ENCODE measurements at regions of chr1 and their contacts with region 1.

Region 1: GRCh38 chr1:241611063-241611462 is 29.1 kb downstream of the CHML start:
- DNase-seq: peak; percentile 75
- ATAC-seq: peak; percentile 95
- H3K4me3 ChIP-seq: no peak overlapping the region
- H3K4me3 Mint-ChIP-seq: no peak overlapping the region
- H3K27ac ChIP-seq: peak overlapping the region in 1 of 2 donors; percentile 39
- H3K27ac Mint-ChIP-seq: no peak overlapping the region
- H3K4me1 ChIP-seq: peaks cover 6 to 7% of the 10 kb centered on the region in 2 donors
- H3K4me1 Mint-ChIP-seq: peaks cover 8% of the 10 kb centered on the region
- H3K27me3 ChIP-seq: no peaks in the 10 kb centered on the region
- H3K27me3 Mint-ChIP-seq: no peaks in the 10 kb centered on the region
- CTCF ChIP-seq: peak; percentile 82

Region 2: DNA sequence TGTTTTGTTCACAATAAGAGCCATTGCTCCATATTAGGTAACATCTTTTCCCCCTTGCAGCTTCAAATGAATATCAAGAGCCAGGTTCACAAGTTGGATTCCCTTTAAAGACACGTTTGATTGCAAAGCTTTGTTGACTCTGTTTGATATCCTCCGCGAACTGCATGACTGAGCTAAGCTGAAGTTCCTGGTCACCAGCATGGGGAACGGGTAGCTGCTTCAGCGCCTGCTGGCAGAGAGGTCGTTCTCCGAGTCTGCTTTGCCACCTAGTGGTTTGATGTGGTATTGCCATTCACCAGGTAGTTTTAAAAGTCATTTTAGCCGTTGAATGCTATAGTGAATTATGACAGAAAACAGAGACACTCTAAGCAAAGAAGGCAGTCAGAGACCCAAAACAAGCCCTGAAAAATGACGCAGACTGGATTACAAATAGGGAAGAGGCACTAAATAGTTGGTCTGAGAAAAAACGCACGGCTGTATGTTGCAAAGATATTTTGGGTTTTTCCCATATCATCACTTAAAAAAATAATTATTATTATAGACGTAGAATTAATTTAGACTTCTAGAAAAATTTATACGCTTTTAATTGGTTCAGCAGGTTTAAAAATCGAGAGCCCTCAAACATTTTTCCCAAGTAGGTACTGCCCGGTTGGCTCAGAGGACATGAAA is 1712.9 kb before region 1 on chr1:
- CTCF ChIA-PET with region 1: no interaction called
- POLR2A ChIA-PET with region 1: no interaction called
- intact Hi-C with region 1: no loop called
- DNase-seq: peak; percentile 62
- ATAC-seq: peak; percentile 47
- H3K4me3 ChIP-seq: no peak overlapping the region
- H3K4me3 Mint-ChIP-seq: no peak overlapping the region
- H3K27ac ChIP-seq: no peak overlapping the region
- H3K27ac Mint-ChIP-seq: no peak overlapping the region
- H3K4me1 ChIP-seq: peaks cover 3% of the 10 kb centered on the region in 2 donors
- H3K4me1 Mint-ChIP-seq: peaks cover 2% of the 10 kb centered on the region
- H3K27me3 ChIP-seq: no peaks in the 10 kb centered on the region
- H3K27me3 Mint-ChIP-seq: no peaks in the 10 kb centered on the region
- CTCF ChIP-seq: peak; percentile 90

Region 3: GRCh38 chr1:241086686-241087085 is 524.4 kb before region 1 on chr1:
- CTCF ChIA-PET with region 1: no interaction called
- POLR2A ChIA-PET with region 1: no interaction called
- intact Hi-C with region 1: no loop called
- DNase-seq: no peak
- ATAC-seq: no peak
- H3K4me3 ChIP-seq: no peak overlapping the region
- H3K4me3 Mint-ChIP-seq: no peak overlapping the region
- H3K27ac ChIP-seq: no peak overlapping the region
- H3K27ac Mint-ChIP-seq: no peak overlapping the region
- H3K4me1 ChIP-seq: no peaks in the 10 kb centered on the region
- H3K4me1 Mint-ChIP-seq: peaks cover 3% of the 10 kb centered on the region
- H3K27me3 ChIP-seq: no peaks in the 10 kb centered on the region
- H3K27me3 Mint-ChIP-seq: no peaks in the 10 kb centered on the region
- CTCF ChIP-seq: no peak

Region 4: GRCh38 chr1:241356519-241357365 is 254.3 kb before region 1 on chr1 and contains the start of gene RGS7:
- CTCF ChIA-PET with region 1: no interaction called
- POLR2A ChIA-PET with region 1: no interaction called
- intact Hi-C with region 1: no loop called
- DNase-seq: peak; percentile 54
- ATAC-seq: peak; percentile 64
- H3K4me3 ChIP-seq: peak within 1 kb of the TSS in 4 of 5 experiments; percentile 32 to 75 (median 57)
- H3K4me3 Mint-ChIP-seq: peak within 1 kb of the TSS; percentile 87
- H3K27ac ChIP-seq: no peak within 1 kb of the TSS
- H3K27ac Mint-ChIP-seq: no peak within 1 kb of the TSS
- H3K4me1 ChIP-seq: peaks cover 8 to 12% of the 10 kb centered on the region in 2 donors
- H3K4me1 Mint-ChIP-seq: peaks cover 14% of the 10 kb centered on the region
- H3K27me3 ChIP-seq: peaks cover 0 to 17% (median 10%) of the 10 kb centered on the region in 4 experiments
- H3K27me3 Mint-ChIP-seq: peaks cover 54% of the 10 kb centered on the region
- CTCF ChIP-seq: no peak
- total RNA-seq, gene RGS7: 0.15 TPM in 1 of 2 replicates, not detected in the other

Region 5: DNA sequence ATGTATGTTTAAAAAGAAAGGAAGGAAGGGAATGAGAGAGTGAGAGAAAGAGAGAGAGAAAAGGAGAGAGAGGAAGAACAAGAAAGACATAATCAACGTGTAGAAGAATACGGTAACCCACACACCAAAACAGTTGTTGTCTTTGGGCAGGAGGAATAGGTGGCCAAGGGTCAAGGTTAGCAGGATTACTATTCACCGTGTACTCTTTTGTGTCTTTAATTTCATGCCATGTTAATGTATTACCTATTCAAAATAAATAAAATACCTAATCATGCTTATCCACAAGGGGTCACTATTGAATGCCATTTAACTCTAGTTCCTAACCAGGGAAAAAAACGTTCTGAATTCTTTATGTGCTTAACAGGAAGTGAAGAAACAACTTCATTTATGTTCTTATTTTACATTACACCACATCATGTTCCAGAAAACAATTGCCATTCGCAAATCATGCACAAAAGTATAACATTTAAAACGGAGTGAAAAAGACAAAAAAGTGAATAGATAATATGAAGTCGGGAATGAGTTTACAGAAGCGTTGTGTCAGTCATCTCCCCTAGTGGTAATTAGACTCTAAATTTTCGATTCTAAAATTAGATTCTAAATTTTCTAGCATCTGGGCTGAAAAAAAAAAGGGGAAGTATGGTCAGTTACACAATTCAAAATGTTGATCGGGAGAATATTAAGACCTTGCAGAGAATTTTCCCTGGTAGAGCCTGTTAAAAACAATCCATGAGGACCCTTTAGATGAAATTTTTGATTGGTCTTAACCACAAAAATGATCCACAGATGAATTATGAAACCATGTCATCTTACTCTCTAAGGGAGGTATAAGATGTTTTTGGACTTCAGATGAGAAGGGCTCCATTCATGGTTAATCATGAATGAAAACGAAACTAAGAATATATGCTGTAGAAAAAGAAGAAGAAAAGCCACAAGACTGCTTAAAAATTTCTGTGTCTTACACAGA is 79.6 kb before region 1 on chr1:
- CTCF ChIA-PET with region 1: interaction called, 10 read pairs
- POLR2A ChIA-PET with region 1: no interaction called
- intact Hi-C with region 1: loop called (anchors 1 kb)
- DNase-seq: peak; percentile 91
- ATAC-seq: peak; percentile 68
- H3K4me3 ChIP-seq: peak overlapping the region; percentile 58 to 98 (median 78)
- H3K4me3 Mint-ChIP-seq: peak overlapping the region; percentile 92
- H3K27ac ChIP-seq: peak overlapping the region; percentile 87 to 96
- H3K27ac Mint-ChIP-seq: peak overlapping the region; percentile 96
- H3K4me1 ChIP-seq: peaks cover 29 to 41% of the 10 kb centered on the region in 2 donors
- H3K4me1 Mint-ChIP-seq: peaks cover 42% of the 10 kb centered on the region
- H3K27me3 ChIP-seq: no peaks in the 10 kb centered on the region
- H3K27me3 Mint-ChIP-seq: no peaks in the 10 kb centered on the region
- CTCF ChIP-seq: peak; percentile 93

Region 6: DNA sequence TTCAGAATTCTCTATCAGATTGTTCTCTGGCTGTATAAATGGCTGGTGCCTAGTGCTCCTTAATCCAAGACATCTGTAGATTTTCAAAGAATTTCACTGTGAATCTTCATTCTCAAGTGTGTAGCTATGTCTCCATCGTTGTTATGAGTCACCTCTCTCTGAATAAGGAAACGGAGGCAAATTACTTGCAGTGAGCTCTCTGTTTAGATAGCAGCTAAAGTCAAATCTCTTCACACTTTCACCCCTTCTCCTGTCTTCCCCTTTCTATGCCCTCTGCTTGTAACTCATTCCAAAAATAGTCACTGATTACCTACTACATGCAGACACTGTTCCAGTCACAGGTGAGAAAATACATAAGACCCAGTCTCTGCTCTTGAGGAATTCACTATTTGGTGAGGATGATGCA is 10.6 kb before region 1 on chr1:
- CTCF ChIA-PET with region 1: interaction called, 10 read pairs
- POLR2A ChIA-PET with region 1: interaction called, 4 read pairs
- intact Hi-C with region 1: loop called (anchors 2 kb)
- DNase-seq: peak; percentile 24
- ATAC-seq: peak; percentile 49
- H3K4me3 ChIP-seq: peak overlapping the region in 1 of 5 experiments; percentile 3
- H3K4me3 Mint-ChIP-seq: peak overlapping the region; percentile 35
- H3K27ac ChIP-seq: peak overlapping the region; percentile 34 to 67
- H3K27ac Mint-ChIP-seq: peak overlapping the region; percentile 79
- H3K4me1 ChIP-seq: peaks cover 33 to 37% of the 10 kb centered on the region in 2 donors
- H3K4me1 Mint-ChIP-seq: peaks cover 49% of the 10 kb centered on the region
- H3K27me3 ChIP-seq: no peaks in the 10 kb centered on the region
- H3K27me3 Mint-ChIP-seq: no peaks in the 10 kb centered on the region
- CTCF ChIP-seq: no peak

Region 7: GRCh38 chr1:241640029-241640818 is 29.2 kb after region 1 on chr1 and contains the starts of genes CHML and OPN3:
- CTCF ChIA-PET with region 1: interaction called, 15 read pairs
- POLR2A ChIA-PET with region 1: no interaction called
- intact Hi-C with region 1: no loop called
- DNase-seq: peak; percentile 93
- ATAC-seq: peak; percentile 94
- H3K4me3 ChIP-seq: peak within 1 kb of the TSS; percentile 78 to 97 (median 94)
- H3K4me3 Mint-ChIP-seq: peak within 1 kb of the TSS; percentile 84
- H3K27ac ChIP-seq: peak within 1 kb of the TSS; percentile 71 to 81
- H3K27ac Mint-ChIP-seq: peak within 1 kb of the TSS; percentile 93
- H3K4me1 ChIP-seq: peaks cover 37 to 43% of the 10 kb centered on the region in 2 donors
- H3K4me1 Mint-ChIP-seq: peaks cover 51% of the 10 kb centered on the region
- H3K27me3 ChIP-seq: no peaks in the 10 kb centered on the region
- H3K27me3 Mint-ChIP-seq: no peaks in the 10 kb centered on the region
- CTCF ChIP-seq: no peak
- total RNA-seq, gene CHML: 31.5 and 34.0 TPM in 2 replicates
- total RNA-seq, gene OPN3: 29.2 and 29.6 TPM in 2 replicates

Region 8: DNA sequence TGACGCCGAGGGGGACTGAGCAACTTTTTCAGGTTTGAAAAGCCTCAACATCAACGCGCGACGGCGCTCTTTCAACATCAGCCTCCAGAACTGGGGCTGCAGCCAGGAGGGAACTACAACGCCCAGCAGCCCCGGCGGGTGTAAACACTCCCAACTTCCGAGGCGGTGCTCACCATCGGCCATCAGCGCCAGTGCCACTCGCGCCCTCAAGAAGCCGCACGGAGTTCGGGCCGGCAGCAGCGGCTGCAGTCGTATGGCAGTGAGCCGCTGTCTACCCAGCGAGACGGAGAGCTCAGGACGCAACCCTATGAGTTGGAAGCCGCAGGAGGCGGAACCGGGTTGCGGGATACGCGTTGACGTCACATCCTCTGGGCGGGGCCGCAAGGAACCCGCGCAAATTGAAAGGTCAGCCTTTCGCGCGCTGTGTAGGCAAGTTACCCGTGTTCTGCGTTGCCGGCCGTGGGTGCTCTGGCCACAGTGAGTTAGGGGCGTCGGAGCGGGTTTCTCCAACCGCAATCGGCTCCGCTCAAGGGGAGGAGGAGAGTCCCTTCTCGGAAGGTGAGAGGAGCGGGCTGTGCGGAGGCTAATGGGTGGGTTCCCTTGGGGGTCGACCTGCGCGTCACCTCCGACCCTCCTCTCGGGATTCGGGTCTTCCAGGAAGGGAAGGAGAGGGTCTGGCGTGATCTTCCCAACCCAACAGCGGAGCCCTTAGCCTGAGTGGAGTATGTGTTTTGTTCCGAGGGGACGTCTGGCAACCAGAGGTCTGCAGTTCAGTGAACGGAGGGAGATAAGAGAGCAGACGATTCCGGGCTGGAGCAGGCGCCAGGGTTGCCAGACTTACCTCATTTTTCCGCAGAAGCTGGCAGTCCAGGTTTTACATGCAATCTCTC is 237.0 kb after region 1 on chr1 and contains the start of gene EXO1:
- CTCF ChIA-PET with region 1: interaction called, 7 read pairs
- POLR2A ChIA-PET with region 1: no interaction called
- intact Hi-C with region 1: loop called (anchors 1 kb)
- DNase-seq: peak; percentile 96
- ATAC-seq: peak; percentile 98
- H3K4me3 ChIP-seq: peak within 1 kb of the TSS; percentile 73 to 98 (median 95)
- H3K4me3 Mint-ChIP-seq: peak within 1 kb of the TSS; percentile 99
- H3K27ac ChIP-seq: peak within 1 kb of the TSS; percentile 92 to 97
- H3K27ac Mint-ChIP-seq: peak within 1 kb of the TSS; percentile 99
- H3K4me1 ChIP-seq: peaks cover 9 to 12% of the 10 kb centered on the region in 2 donors
- H3K4me1 Mint-ChIP-seq: peaks cover 17% of the 10 kb centered on the region
- H3K27me3 ChIP-seq: no peaks in the 10 kb centered on the region
- H3K27me3 Mint-ChIP-seq: no peaks in the 10 kb centered on the region
- CTCF ChIP-seq: peak; percentile 47
- total RNA-seq, gene EXO1: 1.2 and 1.6 TPM in 2 replicates

Region 9: DNA sequence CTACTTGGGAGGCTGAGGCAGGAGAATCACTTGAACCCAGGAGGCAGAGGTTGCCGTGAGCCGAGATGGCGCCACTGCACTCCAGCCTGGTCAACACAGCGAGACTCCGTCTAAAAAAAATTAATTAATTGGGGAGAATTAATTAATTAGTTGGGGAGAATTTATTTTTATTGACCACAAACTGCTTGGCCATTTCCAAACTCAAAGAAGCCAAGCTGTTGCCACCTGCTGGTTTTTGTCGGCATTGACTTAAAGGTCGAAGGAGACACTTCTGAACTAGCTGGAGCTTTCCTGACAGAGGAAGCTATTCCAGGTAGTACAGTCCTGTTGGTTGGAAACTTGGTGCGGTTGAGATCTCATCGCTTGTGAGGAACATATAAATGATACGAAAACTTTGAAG is 374.7 kb after region 1 on chr1:
- CTCF ChIA-PET with region 1: interaction called, 19 read pairs
- POLR2A ChIA-PET with region 1: no interaction called
- intact Hi-C with region 1: no loop called
- DNase-seq: peak; percentile 27
- ATAC-seq: no peak
- H3K4me3 ChIP-seq: no peak overlapping the region
- H3K4me3 Mint-ChIP-seq: no peak overlapping the region
- H3K27ac ChIP-seq: no peak overlapping the region
- H3K27ac Mint-ChIP-seq: no peak overlapping the region
- H3K4me1 ChIP-seq: no peaks in the 10 kb centered on the region
- H3K4me1 Mint-ChIP-seq: no peaks in the 10 kb centered on the region
- H3K27me3 ChIP-seq: no peaks in the 10 kb centered on the region
- H3K27me3 Mint-ChIP-seq: no peaks in the 10 kb centered on the region
- CTCF ChIP-seq: peak; percentile 19

Region 10: DNA sequence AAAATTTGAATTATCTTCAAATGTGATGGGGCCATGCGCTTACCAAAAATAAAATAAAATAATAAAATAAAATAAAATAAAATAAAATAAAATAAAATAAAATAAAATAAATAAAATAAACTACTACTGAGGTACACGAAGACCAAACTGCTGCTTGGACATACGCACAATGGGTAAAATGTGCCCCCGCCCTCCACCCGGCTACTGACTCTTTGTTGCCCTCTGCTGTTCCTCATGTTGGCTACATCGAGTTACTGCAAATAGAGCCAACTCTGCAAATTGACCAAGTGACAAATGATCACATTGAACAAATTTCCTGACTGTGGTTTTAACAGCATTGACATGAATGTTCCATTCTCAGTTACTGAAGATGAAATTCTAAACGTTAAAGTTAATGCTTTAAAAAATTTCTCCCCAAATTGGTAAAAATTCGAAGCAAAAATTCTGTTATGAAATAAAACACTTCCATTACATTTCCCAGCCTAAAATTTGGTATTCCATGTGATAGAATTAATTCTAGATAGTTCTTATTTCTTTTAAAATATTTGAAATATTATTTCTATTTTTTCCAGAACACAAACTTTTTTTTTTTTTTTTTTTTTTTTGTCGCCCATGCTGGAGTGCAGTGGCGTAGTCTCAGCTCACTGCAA is 406.6 kb after region 1 on chr1:
- CTCF ChIA-PET with region 1: interaction called, 3 read pairs
- POLR2A ChIA-PET with region 1: no interaction called
- intact Hi-C with region 1: loop called (anchors 1 kb)
- DNase-seq: peak; percentile 56
- ATAC-seq: peak; percentile 68
- H3K4me3 ChIP-seq: no peak overlapping the region
- H3K4me3 Mint-ChIP-seq: no peak overlapping the region
- H3K27ac ChIP-seq: no peak overlapping the region
- H3K27ac Mint-ChIP-seq: no peak overlapping the region
- H3K4me1 ChIP-seq: no peaks in the 10 kb centered on the region
- H3K4me1 Mint-ChIP-seq: no peaks in the 10 kb centered on the region
- H3K27me3 ChIP-seq: no peaks in the 10 kb centered on the region
- H3K27me3 Mint-ChIP-seq: no peaks in the 10 kb centered on the region
- CTCF ChIP-seq: peak; percentile 75